ENCODE measurements at regions of chr16 and their contacts with region 1.

Region 1: GRCh38 chr16:24010440-24011089 is 174.8 kb downstream of the PRKCB start:
- DNase-seq: peak; percentile 54 to 89 (median 85)
- ATAC-seq: no peak
- H3K4me3 ChIP-seq: no peak overlapping the region
- H3K4me3 Mint-ChIP-seq: no peak overlapping the region
- H3K27ac ChIP-seq: no peak overlapping the region
- H3K27ac Mint-ChIP-seq: peak overlapping the region; percentile 18
- H3K4me1 ChIP-seq: peaks cover 50% of the 10 kb centered on the region
- H3K4me1 Mint-ChIP-seq: peaks cover 66% of the 10 kb centered on the region
- H3K27me3 ChIP-seq: no peaks in the 10 kb centered on the region
- H3K27me3 Mint-ChIP-seq: no peaks in the 10 kb centered on the region
- CTCF ChIP-seq: peak; percentile 86

Region 2: GRCh38 chr16:23556881-23557778 is 453.4 kb before region 1 on chr16 and contains the starts of genes EARS2 and UBFD1:
- CTCF ChIA-PET with region 1: no interaction called
- POLR2A ChIA-PET with region 1: no interaction called
- intact Hi-C with region 1: loop called in 1 of 2 experiments (anchors 5 kb)
- DNase-seq: peak; percentile 90 to 98 (median 95)
- ATAC-seq: peak; percentile 90
- H3K4me3 ChIP-seq: peak within 1 kb of the TSS; percentile 82 to 90
- H3K4me3 Mint-ChIP-seq: peak within 1 kb of the TSS; percentile 91
- H3K27ac ChIP-seq: peak within 1 kb of the TSS; percentile 88 to 92
- H3K27ac Mint-ChIP-seq: peak within 1 kb of the TSS; percentile 92
- H3K4me1 ChIP-seq: peaks cover 21% of the 10 kb centered on the region
- H3K4me1 Mint-ChIP-seq: peaks cover 38% of the 10 kb centered on the region
- H3K27me3 ChIP-seq: no peaks in the 10 kb centered on the region
- H3K27me3 Mint-ChIP-seq: no peaks in the 10 kb centered on the region
- CTCF ChIP-seq: peak; percentile 48
- total RNA-seq, gene EARS2: 7.2 to 8.8 TPM
- total RNA-seq, gene UBFD1: 49.0 to 51.1 TPM

Region 3: DNA sequence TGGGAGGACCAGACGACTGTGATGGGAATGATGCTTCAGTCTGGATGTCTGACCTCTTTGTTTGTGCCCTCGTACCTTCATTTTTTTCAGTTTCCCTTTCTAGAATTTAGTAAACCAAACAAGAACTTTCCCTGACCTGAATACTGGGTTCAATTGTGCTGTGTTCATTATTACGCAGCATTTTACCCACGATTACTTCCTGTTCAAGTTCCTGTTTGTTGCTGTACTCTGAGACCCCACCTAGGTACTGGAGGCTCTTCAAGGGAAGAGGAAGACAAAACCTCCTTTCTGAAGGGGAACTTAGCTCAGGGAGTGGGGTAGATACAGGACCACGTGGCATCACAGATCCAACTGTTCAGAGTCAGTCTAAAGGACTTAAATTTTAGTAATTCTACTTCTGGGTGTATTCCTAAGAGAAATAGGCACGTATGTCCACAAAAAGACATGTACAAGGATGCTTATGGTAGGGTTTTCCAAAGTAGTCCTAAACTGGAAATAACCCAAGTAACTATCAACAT is 184.0 kb before region 1 on chr16:
- CTCF ChIA-PET with region 1: interaction called, 11 read pairs
- POLR2A ChIA-PET with region 1: interaction called, 3 read pairs
- intact Hi-C with region 1: no loop called
- DNase-seq: peak in 5 of 9 experiments; percentile 11 to 83 (median 58)
- ATAC-seq: peak; percentile 95
- H3K4me3 ChIP-seq: peak overlapping the region in 1 of 2 experiments; percentile 19
- H3K4me3 Mint-ChIP-seq: peak overlapping the region; percentile 63
- H3K27ac ChIP-seq: peak overlapping the region; percentile 32 to 73
- H3K27ac Mint-ChIP-seq: peak overlapping the region; percentile 93
- H3K4me1 ChIP-seq: peaks cover 25% of the 10 kb centered on the region
- H3K4me1 Mint-ChIP-seq: peaks cover 35% of the 10 kb centered on the region
- H3K27me3 ChIP-seq: no peaks in the 10 kb centered on the region
- H3K27me3 Mint-ChIP-seq: no peaks in the 10 kb centered on the region
- CTCF ChIP-seq: no peak

Region 4: DNA sequence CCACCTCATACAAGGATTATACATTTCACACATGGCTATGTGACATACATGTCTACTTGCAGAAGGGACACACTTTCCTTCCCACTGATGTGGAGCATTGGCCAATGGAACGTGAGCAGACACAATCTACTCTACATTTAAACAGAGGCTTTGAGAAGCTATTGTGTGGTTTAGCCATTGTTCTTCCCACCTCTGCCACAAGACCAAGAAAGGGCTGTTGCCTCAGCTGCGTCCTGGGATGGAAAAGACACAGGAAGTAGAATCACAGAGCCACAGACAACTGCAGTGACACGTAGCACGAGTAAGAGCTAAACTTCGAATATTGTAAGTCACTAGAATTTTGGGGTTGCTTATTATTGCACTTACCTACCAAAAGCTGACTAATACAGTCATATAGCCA is 141.5 kb before region 1 on chr16:
- CTCF ChIA-PET with region 1: interaction called, 20 read pairs
- POLR2A ChIA-PET with region 1: interaction called, 5 read pairs
- intact Hi-C with region 1: no loop called
- DNase-seq: peak in 7 of 9 experiments; percentile 13 to 77 (median 29)
- ATAC-seq: peak; percentile 79
- H3K4me3 ChIP-seq: no peak overlapping the region
- H3K4me3 Mint-ChIP-seq: peak overlapping the region; percentile 26
- H3K27ac ChIP-seq: peak overlapping the region in 1 of 2 experiments; percentile 1
- H3K27ac Mint-ChIP-seq: peak overlapping the region; percentile 78
- H3K4me1 ChIP-seq: peaks cover 56% of the 10 kb centered on the region
- H3K4me1 Mint-ChIP-seq: peaks cover 76% of the 10 kb centered on the region
- H3K27me3 ChIP-seq: no peaks in the 10 kb centered on the region
- H3K27me3 Mint-ChIP-seq: no peaks in the 10 kb centered on the region
- CTCF ChIP-seq: no peak

Region 5: GRCh38 chr16:23901178-23902033 is 109.2 kb before region 1 on chr16:
- CTCF ChIA-PET with region 1: interaction called, 19 read pairs
- POLR2A ChIA-PET with region 1: interaction called, 3 read pairs
- intact Hi-C with region 1: no loop called
- DNase-seq: peak in 1 of 9 experiments; percentile 14
- ATAC-seq: no peak
- H3K4me3 ChIP-seq: no peak overlapping the region
- H3K4me3 Mint-ChIP-seq: peak overlapping the region; percentile 57
- H3K27ac ChIP-seq: no peak overlapping the region
- H3K27ac Mint-ChIP-seq: peak overlapping the region; percentile 77
- H3K4me1 ChIP-seq: peaks cover 51% of the 10 kb centered on the region
- H3K4me1 Mint-ChIP-seq: peaks cover 83% of the 10 kb centered on the region
- H3K27me3 ChIP-seq: no peaks in the 10 kb centered on the region
- H3K27me3 Mint-ChIP-seq: no peaks in the 10 kb centered on the region
- CTCF ChIP-seq: no peak

Region 6: DNA sequence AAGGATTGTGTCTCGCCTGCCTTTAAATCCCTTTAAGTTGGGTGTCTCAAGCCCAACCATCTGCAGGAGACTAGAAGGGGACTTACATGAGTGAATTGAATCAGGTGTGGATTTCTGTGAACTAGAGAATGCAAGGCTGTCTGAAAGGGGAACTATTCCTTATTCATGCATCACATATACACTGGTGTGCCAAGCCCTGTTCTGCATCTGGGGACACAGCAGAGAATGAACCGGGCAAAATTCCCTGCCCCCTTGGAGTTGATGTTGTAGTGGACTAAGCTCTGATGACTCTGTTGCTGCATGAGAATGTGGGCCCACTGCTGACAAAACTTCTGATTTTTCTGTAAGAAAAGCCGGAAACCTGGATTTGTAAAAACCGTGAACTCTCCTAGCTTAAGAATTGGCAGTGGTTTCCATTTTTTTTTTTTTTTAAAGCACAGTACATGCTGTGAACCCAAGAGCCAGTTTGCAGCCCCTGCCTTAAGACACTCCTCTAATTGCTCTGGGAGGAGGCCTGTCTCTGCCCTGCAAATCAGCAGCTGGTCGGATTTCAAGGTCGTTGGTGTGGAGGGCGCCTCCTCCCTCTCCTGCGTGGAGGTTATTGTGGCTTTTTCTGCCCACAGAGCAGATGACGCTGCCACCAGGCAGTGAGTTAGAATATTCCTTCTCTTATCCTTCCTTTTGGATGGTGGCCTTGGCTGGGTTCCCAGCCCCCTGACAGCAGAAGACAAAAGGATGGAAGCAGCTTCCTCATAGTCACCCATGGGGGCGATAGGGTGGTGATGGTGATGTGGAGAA is 43.8 kb before region 1 on chr16:
- CTCF ChIA-PET with region 1: interaction called, 13 read pairs
- POLR2A ChIA-PET with region 1: interaction called, 3 read pairs
- intact Hi-C with region 1: loop called in 1 of 2 experiments (anchors 2 kb)
- DNase-seq: peak in 2 of 9 experiments; percentile 16 to 41
- ATAC-seq: no peak
- H3K4me3 ChIP-seq: no peak overlapping the region
- H3K4me3 Mint-ChIP-seq: peak overlapping the region; percentile 23
- H3K27ac ChIP-seq: no peak overlapping the region
- H3K27ac Mint-ChIP-seq: peak overlapping the region; percentile 60
- H3K4me1 ChIP-seq: peaks cover 25% of the 10 kb centered on the region
- H3K4me1 Mint-ChIP-seq: peaks cover 55% of the 10 kb centered on the region
- H3K27me3 ChIP-seq: no peaks in the 10 kb centered on the region
- H3K27me3 Mint-ChIP-seq: no peaks in the 10 kb centered on the region
- CTCF ChIP-seq: no peak

Region 7: GRCh38 chr16:24022797-24023196 is 12.2 kb after region 1 on chr16:
- CTCF ChIA-PET with region 1: interaction called, 15 read pairs
- POLR2A ChIA-PET with region 1: interaction called, 7 read pairs
- intact Hi-C with region 1: no loop called
- DNase-seq: no peak
- ATAC-seq: no peak
- H3K4me3 ChIP-seq: no peak overlapping the region
- H3K4me3 Mint-ChIP-seq: no peak overlapping the region
- H3K27ac ChIP-seq: no peak overlapping the region
- H3K27ac Mint-ChIP-seq: no peak overlapping the region
- H3K4me1 ChIP-seq: peaks cover 11% of the 10 kb centered on the region
- H3K4me1 Mint-ChIP-seq: peaks cover 43% of the 10 kb centered on the region
- H3K27me3 ChIP-seq: no peaks in the 10 kb centered on the region
- H3K27me3 Mint-ChIP-seq: no peaks in the 10 kb centered on the region
- CTCF ChIP-seq: no peak

Measured in CD8-positive, alpha-beta T cell (primary cell).